ENCODE measurements at regions of chr10 and their contacts with region 1.

Region 1: GRCh38 chr10:58177362-58177947 is 90.2 kb downstream of the IPMK start:
- DNase-seq: peak; percentile 17 to 42 (median 20)
- ATAC-seq: peak; percentile 58
- H3K4me3 ChIP-seq: no peak overlapping the region
- H3K27ac ChIP-seq: no peak overlapping the region
- H3K4me1 ChIP-seq: peaks cover 0 to 16% of the 10 kb centered on the region in 2 experiments; a peak in 2 of 5 replicates
- H3K27me3 ChIP-seq: no peaks in the 10 kb centered on the region
- CTCF ChIP-seq: peak in 2 of 3 experiments; percentile 56 to 83; a peak in 4 of 6 replicates
- EP300 ChIP-seq: no peak
- POLR2A ChIP-seq: no peak
- RAD21 ChIP-seq: peak; percentile 84 to 90

Region 2: GRCh38 chr10:58107506-58107905 is 69.9 kb before region 1 on chr10:
- CTCF ChIA-PET with region 1: no interaction called
- POLR2A ChIA-PET with region 1: no interaction called
- in situ Hi-C with region 1: no loop called
- intact Hi-C with region 1: no loop called
- DNase-seq: no peak
- ATAC-seq: no peak
- H3K4me3 ChIP-seq: no peak overlapping the region
- H3K27ac ChIP-seq: no peak overlapping the region
- H3K4me1 ChIP-seq: no peaks in the 10 kb centered on the region
- H3K27me3 ChIP-seq: no peaks in the 10 kb centered on the region
- CTCF ChIP-seq: no peak
- EP300 ChIP-seq: no peak
- POLR2A ChIP-seq: no peak
- RAD21 ChIP-seq: no peak

Region 3: DNA sequence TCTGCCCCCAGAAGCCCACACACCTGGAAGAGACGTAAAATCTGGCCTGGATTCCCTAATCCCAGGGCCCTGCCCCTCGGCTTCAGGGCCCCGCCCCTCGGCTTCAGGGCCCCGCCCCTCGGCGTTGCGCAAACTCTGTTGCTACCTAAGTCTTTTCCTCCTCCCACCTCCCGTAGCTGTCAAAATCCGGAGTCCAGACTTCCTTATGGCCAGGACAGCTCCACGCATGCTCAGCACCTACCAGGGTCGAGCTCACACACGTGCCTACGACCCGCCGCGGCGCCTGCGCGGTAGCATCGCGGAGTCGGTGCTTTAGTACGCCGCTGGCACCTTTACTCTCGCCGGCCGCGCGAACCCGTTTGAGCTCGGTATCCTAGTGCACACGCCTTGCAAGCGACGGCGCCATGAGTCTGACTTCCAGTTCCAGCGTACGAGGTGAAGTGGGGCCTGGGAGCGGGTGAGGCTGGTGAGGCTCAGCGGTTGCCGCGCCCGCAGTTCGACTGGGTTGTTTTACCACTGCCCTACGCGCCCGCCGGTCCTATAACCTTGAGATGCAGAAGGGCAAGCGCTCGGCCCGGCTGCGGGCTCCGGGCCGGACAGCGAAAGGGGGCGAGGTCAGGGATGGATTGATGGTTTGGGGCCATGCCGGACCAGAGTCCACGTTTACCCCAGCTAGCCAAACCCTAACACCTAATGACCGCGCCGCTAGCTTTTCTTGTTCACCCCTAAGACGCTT is 91.6 kb after region 1 on chr10 and contains the start of gene CISD1:
- CTCF ChIA-PET with region 1: no interaction called
- POLR2A ChIA-PET with region 1: no interaction called
- in situ Hi-C with region 1: loop called (anchors 5 kb)
- intact Hi-C with region 1: loop called (anchors 5 kb)
- DNase-seq: peak; percentile 98 to 99 (median 99)
- ATAC-seq: peak; percentile 81
- H3K4me3 ChIP-seq: peak within 1 kb of the TSS; percentile 71
- H3K27ac ChIP-seq: peak within 1 kb of the TSS; percentile 86
- H3K4me1 ChIP-seq: peaks cover 3 to 21% of the 10 kb centered on the region in 2 experiments; a peak in 3 of 5 replicates
- H3K27me3 ChIP-seq: no peaks in the 10 kb centered on the region
- CTCF ChIP-seq: no peak
- EP300 ChIP-seq: no peak; the same call in 1 of the 2 replicates
- POLR2A ChIP-seq: peak; percentile 95
- RAD21 ChIP-seq: no peak; a peak in 1 of 4 replicates
- polyA plus RNA-seq, gene CISD1: 308 to 342 TPM

Region 4: DNA sequence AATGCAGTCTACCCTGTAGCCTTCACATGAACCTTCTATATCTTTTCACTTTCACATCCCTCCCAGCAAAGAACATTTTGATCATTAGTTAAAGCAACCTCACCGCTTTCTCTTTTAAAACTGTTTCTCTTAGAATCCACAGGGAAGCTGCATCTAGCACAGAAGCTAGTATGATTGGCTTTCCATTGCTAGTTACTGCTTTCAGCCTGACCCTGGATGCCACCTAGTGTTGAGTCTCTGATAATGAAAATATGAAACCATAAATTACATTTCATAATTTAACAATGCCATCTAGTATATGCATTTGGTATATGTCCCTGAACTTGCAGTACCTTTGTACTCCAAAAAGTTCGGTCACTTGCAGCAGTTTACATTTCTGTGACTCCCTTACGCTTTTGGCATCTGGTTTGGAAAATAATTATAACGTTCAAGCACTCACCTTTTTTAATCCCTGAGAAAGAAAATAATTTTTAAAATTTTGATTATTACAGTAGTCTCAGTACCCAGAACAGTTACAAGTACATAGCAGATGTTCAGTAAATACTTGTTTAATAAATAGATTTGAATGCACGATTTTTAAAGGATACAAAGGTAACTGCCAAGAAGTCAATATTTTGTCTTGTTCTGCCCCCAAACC is 114.2 kb after region 1 on chr10:
- CTCF ChIA-PET with region 1: interaction called, 66 read pairs
- POLR2A ChIA-PET with region 1: interaction called, 3 read pairs
- in situ Hi-C with region 1: no loop called
- intact Hi-C with region 1: loop called (anchors 1 kb)
- DNase-seq: peak; percentile 24 to 60 (median 38)
- ATAC-seq: peak; percentile 87
- H3K4me3 ChIP-seq: no peak overlapping the region
- H3K27ac ChIP-seq: no peak overlapping the region
- H3K4me1 ChIP-seq: no peaks in the 10 kb centered on the region
- H3K27me3 ChIP-seq: no peaks in the 10 kb centered on the region
- CTCF ChIP-seq: peak; percentile 63 to 93 (median 66)
- EP300 ChIP-seq: no peak
- POLR2A ChIP-seq: no peak
- RAD21 ChIP-seq: peak; percentile 91 to 97

Region 5: DNA sequence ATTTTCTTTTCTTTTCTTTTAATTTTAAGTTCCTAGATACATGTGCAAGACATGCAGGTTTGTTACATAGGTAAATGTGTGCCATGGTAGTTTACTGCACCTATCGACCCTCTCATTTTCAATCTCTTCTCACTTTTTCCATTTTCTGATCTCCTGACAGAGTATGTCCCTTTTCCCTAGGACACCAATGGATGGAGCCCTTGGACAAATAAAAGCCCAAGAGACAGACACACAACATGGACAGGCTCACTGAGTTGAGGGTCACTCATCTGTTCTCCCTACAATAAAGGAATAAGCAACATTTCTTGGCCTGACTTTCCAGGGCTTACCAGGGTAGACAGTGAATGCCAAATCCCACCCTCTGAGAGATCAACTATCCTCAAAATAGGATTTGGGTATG is 142.1 kb after region 1 on chr10:
- CTCF ChIA-PET with region 1: no interaction called
- POLR2A ChIA-PET with region 1: no interaction called
- in situ Hi-C with region 1: no loop called
- intact Hi-C with region 1: no loop called
- DNase-seq: peak in 1 of 4 experiments; percentile 25
- ATAC-seq: peak; percentile 60
- H3K4me3 ChIP-seq: no peak overlapping the region
- H3K27ac ChIP-seq: no peak overlapping the region
- H3K4me1 ChIP-seq: peaks cover 0 to 18% of the 10 kb centered on the region in 2 experiments; a peak in 2 of 5 replicates
- H3K27me3 ChIP-seq: no peaks in the 10 kb centered on the region
- CTCF ChIP-seq: peak in 1 of 3 experiments; percentile 42; a peak in 2 of 6 replicates
- EP300 ChIP-seq: no peak
- POLR2A ChIP-seq: no peak
- RAD21 ChIP-seq: peak; percentile 14 to 62; a peak in 2 of 4 replicates

Region 6: GRCh38 chr10:58531084-58531695 is 353.7 kb after region 1 on chr10:
- CTCF ChIA-PET with region 1: no interaction called
- POLR2A ChIA-PET with region 1: no interaction called
- in situ Hi-C with region 1: no loop called
- intact Hi-C with region 1: loop called (anchors 10 kb)
- DNase-seq: peak; percentile 21 to 45 (median 38)
- ATAC-seq: peak; percentile 75
- H3K4me3 ChIP-seq: no peak overlapping the region
- H3K27ac ChIP-seq: no peak overlapping the region
- H3K4me1 ChIP-seq: no peaks in the 10 kb centered on the region
- H3K27me3 ChIP-seq: no peaks in the 10 kb centered on the region
- CTCF ChIP-seq: peak; percentile 38 to 65 (median 61); a peak in 5 of 6 replicates
- EP300 ChIP-seq: no peak
- POLR2A ChIP-seq: no peak
- RAD21 ChIP-seq: peak; percentile 43 to 59; a peak in 3 of 4 replicates